ENCODE measurements at regions of chr4 and their contacts with region 1.

Region 1: GRCh38 chr4:174928174-174928573 is 10.0 kb downstream of the ADAM29 start:
- DNase-seq: peak; percentile 99
- H3K4me3 ChIP-seq: peak overlapping the region; percentile 53
- H3K27ac ChIP-seq: peak overlapping the region; percentile 100
- H3K4me1 ChIP-seq: peaks cover 94% of the 10 kb centered on the region
- CTCF ChIP-seq: no peak

Region 2: DNA sequence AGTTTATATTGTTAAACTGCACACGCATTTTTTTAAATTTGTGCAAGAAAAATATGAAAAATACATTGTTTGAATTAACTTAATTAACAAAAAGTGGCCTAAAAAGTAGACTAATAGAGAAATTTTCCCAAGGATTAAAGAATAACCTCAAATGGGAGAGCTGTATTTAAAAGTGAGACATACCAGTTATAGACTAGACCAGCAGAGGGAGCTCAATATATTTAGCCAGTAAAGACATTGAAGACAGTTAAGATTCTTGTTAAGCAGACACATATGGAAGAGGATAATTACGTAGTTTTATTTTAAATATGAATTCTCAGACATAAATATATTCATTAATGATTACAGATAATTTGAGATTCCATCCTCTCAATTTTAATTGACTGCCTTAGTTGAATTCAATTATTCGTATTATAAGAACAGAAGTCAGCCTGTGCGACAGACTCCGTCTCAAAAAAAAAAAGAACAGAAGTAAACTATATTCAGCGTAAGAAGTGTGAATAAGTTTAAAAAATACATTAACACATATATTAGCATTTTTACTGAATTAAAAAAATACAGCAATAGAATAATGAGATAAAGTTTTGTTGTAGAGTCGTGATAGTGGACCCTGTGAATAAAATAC is 164.0 kb before region 1 on chr4:
- CTCF ChIA-PET with region 1: no interaction called
- POLR2A ChIA-PET with region 1: no interaction called
- intact Hi-C with region 1: loop called (anchors 1 kb)
- DNase-seq: peak; percentile 79
- H3K4me3 ChIP-seq: no peak overlapping the region
- H3K27ac ChIP-seq: no peak overlapping the region
- H3K4me1 ChIP-seq: peaks cover 4% of the 10 kb centered on the region
- CTCF ChIP-seq: peak; percentile 97

Region 3: DNA sequence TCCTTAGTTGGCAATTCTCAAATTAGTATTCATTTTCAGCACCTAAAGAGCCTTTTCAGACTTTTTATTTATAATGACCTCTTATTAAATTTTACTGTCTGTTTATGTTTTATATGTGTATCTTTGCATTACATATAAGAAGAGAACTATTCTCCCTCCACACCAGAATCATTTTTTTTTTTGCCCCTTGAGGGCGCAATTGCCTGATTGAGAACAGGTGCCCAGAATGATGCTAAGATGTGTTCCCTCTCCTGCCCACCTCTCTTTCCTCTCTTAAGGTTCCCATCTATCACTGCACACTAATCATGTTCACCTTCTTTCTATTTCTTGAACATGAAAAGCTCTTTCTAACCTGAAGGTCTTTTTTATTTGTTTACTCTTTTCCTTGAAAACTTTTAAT is 54.2 kb before region 1 on chr4:
- CTCF ChIA-PET with region 1: no interaction called
- POLR2A ChIA-PET with region 1: interaction called, 7 read pairs
- intact Hi-C with region 1: loop called (anchors 1 kb)
- DNase-seq: peak; percentile 85
- H3K4me3 ChIP-seq: no peak overlapping the region
- H3K27ac ChIP-seq: peak overlapping the region; percentile 66
- H3K4me1 ChIP-seq: peaks cover 31% of the 10 kb centered on the region
- CTCF ChIP-seq: peak; percentile 88

Region 4: DNA sequence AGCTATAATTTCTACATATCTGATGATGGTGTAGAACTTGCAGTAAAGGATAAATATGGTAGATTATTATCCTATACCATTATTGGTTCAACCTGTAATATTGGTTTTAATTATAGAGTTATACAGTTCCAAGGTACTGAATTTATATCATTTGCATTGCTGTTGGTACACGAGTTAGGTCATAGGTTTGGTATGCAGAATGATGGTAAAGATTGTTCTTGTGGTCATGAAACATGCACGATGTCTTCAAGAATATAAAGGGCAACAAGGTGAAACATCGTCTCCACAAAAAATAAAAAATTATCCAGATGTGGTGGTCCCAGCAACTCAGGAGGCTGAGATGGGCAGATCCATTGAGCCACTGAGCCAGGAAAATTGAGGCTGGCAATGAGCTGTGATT is 89.6 kb after region 1 on chr4:
- CTCF ChIA-PET with region 1: no interaction called
- POLR2A ChIA-PET with region 1: no interaction called
- intact Hi-C with region 1: no loop called
- DNase-seq: no peak
- H3K4me3 ChIP-seq: no peak overlapping the region
- H3K27ac ChIP-seq: no peak overlapping the region
- H3K4me1 ChIP-seq: no peaks in the 10 kb centered on the region
- CTCF ChIP-seq: no peak

Region 5: DNA sequence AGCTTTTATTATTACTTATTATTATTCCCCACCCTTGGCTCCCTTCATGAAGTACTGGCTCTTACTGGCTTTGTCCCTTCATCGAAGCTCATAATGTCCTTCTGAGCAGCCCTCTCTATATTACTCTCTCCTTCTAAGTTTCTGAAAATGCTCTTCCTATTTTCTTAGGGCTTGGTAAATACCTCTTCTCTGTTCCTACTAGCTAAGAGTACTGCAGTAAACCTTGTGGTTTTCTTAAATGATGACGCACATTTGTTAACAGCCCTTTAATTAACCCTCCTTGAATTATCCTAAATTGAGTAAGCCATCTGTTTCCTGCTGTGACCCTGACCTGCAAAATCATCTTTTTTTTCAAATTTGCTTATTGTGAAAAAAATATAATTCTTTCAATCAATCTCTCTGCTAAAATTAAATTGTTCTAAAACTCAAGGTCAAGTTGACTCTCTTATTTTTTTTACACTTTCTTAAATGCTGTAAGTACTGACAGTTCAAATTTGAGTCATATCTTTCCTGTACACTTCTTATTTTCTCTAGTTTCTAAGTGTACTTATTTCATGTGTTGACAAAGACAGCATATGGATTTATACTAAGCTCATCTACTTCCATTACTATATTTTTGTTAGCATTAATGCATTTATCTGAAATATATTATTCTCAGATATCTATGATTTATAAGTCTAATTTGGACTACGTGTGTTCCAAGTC is 138.9 kb after region 1 on chr4:
- CTCF ChIA-PET with region 1: no interaction called
- POLR2A ChIA-PET with region 1: interaction called, 10 read pairs
- intact Hi-C with region 1: loop called (anchors 2 kb)
- DNase-seq: peak; percentile 43
- H3K4me3 ChIP-seq: peak overlapping the region; percentile 1
- H3K27ac ChIP-seq: peak overlapping the region; percentile 56
- H3K4me1 ChIP-seq: peaks cover 22% of the 10 kb centered on the region
- CTCF ChIP-seq: no peak

Region 6: GRCh38 chr4:175536852-175537453 is 608.8 kb after region 1 on chr4:
- CTCF ChIA-PET with region 1: no interaction called
- POLR2A ChIA-PET with region 1: interaction called, 4 read pairs
- intact Hi-C with region 1: loop called (anchors 5 kb)
- DNase-seq: peak; percentile 82
- H3K4me3 ChIP-seq: no peak overlapping the region
- H3K27ac ChIP-seq: no peak overlapping the region
- H3K4me1 ChIP-seq: peaks cover 4% of the 10 kb centered on the region
- CTCF ChIP-seq: peak; percentile 89

Region 7: GRCh38 chr4:176319704-176320339 is 1391.6 kb after region 1 on chr4 and contains the start of gene SPCS3:
- CTCF ChIA-PET with region 1: no interaction called
- POLR2A ChIA-PET with region 1: no interaction called
- intact Hi-C with region 1: loop called (anchors 10 kb)
- DNase-seq: peak; percentile 98
- H3K4me3 ChIP-seq: peak within 1 kb of the TSS; percentile 99
- H3K27ac ChIP-seq: peak within 1 kb of the TSS; percentile 96
- H3K4me1 ChIP-seq: peaks cover 43% of the 10 kb centered on the region
- CTCF ChIP-seq: no peak
- total RNA-seq, gene SPCS3: 100 and 122 TPM in 2 replicates

Measured in OCI-LY7 (cell line).